GM18951 (cell line): ENCODE measurements at regions of chrX and their contacts with region 1.

Region 1: DNA sequence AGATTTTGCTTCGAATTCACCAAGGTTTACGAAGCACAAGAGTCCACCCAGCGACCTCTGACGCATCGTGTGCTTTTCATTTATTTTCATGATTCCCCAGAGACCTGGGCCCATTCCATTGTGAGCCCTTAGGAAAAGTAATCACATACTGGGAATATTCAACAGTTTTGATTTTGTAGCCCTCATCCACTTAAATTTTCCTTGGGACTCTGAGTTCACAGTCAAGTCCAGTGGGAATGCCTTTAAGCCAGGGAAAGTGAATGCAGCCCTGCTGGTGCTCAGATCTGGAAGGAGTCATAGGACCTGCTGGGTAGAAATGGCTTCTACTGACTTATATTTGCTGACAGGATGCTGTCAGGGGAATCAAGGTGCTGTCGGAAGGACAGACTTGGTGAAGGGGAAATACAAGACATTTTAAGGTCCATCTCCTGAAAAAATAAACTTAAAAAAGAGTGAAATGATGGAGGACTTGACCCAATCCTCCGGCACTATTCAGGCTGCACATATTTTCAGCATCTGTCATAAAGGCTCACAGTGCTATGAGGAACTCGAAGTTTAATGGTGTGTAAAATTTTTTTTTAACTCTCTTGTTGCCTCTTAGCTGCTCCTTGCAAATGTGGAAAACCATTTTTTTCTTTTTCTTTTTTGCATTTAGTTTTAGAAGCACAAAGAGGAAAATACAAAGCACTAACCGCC is 204.9 kb downstream of the MID1 start:
- POLR2A ChIP-seq: no peak

Region 2: DNA sequence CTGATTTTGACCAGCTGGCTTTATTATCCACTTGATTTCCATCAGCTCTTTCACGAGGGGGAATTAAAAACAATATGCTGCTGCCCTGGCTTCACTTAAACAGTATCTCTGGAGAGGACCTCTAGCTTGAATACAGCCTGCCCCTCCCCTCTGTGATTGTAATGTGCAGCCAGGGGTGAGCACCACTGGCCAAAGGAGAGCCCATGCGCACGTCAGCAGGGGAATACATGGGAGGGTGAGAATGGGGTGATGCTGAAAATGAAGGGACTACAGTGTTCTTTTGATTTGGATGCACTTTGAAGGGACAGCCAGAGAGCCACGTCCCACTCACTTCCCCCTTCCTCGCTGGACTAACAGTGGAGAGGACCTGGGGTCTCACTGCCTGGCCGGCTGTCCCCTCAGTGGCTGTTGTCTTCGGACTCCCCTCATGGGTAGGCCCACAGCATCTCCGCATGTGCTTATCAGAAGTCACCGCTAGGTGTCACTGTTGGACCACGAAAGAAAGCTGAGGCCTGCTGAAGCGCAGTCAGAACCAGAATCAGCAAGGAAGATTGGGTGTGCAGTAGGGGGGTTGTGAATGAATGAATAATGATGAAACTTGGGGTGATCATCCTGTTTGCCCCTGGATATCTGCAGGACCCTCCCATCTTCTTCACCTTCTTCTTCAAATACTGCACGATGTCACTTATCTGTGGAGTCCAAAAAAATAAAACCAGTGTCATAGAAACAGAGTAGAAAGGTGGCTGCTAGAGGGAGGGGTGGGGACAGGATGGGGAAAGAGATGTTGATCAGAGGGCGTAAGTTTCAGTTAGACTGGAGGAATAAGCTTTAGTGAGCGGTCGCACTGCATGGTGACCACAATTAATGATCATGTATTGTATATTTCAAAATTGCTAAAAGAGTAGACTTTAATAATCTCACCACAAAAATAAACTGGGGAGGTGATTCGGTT is 225.9 kb before region 1 on chrX:
- in situ Hi-C with region 1: loop called (anchors 25 kb)
- POLR2A ChIP-seq: no peak